ENCODE measurements at regions of chr15 and their contacts with region 1.

Region 1: GRCh38 chr15:30991255-30992072 is at the start of gene MTMR10:
- DNase-seq: peak; percentile 73
- ATAC-seq: peak; percentile 98
- H3K4me3 ChIP-seq: peak within 1 kb of the TSS; percentile 92
- H3K27ac ChIP-seq: peak within 1 kb of the TSS; percentile 79
- H3K4me1 ChIP-seq: peaks cover 2% of the 10 kb centered on the region; the same call in 1 of the 2 replicates
- H3K27me3 ChIP-seq: no peaks in the 10 kb centered on the region
- CTCF ChIP-seq: 0 out of 2 replicates have a peak, but pooled peaks have one; percentile 0
- POLR2A ChIP-seq: peak; percentile 87
- RAD21 ChIP-seq: no peak
- total RNA-seq, gene MTMR10: 13.8 and 22.5 TPM in 2 replicates

Region 2: GRCh38 chr15:30903497-30904201 is 87.8 kb before region 1 on chr15 and contains the start of gene FAN1:
- CTCF ChIA-PET with region 1: no interaction called
- POLR2A ChIA-PET with region 1: no interaction called
- dilution Hi-C with region 1: no loop called
- in situ Hi-C with region 1: no loop called
- intact Hi-C with region 1: no loop called
- DNase-seq: peak; percentile 84
- ATAC-seq: peak; percentile 99
- H3K4me3 ChIP-seq: peak within 1 kb of the TSS; percentile 69
- H3K27ac ChIP-seq: peak within 1 kb of the TSS; percentile 54
- H3K4me1 ChIP-seq: no peaks in the 10 kb centered on the region
- H3K27me3 ChIP-seq: no peaks in the 10 kb centered on the region
- CTCF ChIP-seq: no peak
- POLR2A ChIP-seq: no peak
- RAD21 ChIP-seq: no peak
- total RNA-seq, gene FAN1: 12.4 and 15.0 TPM in 2 replicates

Region 3: GRCh38 chr15:30929064-30929669 is 62.3 kb before region 1 on chr15:
- CTCF ChIA-PET with region 1: no interaction called
- POLR2A ChIA-PET with region 1: no interaction called
- dilution Hi-C with region 1: no loop called
- in situ Hi-C with region 1: no loop called
- intact Hi-C with region 1: loop called (anchors 2 kb)
- DNase-seq: no peak
- ATAC-seq: no peak
- H3K4me3 ChIP-seq: no peak overlapping the region
- H3K27ac ChIP-seq: no peak overlapping the region
- H3K4me1 ChIP-seq: peaks cover 16% of the 10 kb centered on the region
- H3K27me3 ChIP-seq: no peaks in the 10 kb centered on the region; the same call in 1 of the 2 replicates
- CTCF ChIP-seq: no peak
- POLR2A ChIP-seq: no peak
- RAD21 ChIP-seq: no peak

Region 4: DNA sequence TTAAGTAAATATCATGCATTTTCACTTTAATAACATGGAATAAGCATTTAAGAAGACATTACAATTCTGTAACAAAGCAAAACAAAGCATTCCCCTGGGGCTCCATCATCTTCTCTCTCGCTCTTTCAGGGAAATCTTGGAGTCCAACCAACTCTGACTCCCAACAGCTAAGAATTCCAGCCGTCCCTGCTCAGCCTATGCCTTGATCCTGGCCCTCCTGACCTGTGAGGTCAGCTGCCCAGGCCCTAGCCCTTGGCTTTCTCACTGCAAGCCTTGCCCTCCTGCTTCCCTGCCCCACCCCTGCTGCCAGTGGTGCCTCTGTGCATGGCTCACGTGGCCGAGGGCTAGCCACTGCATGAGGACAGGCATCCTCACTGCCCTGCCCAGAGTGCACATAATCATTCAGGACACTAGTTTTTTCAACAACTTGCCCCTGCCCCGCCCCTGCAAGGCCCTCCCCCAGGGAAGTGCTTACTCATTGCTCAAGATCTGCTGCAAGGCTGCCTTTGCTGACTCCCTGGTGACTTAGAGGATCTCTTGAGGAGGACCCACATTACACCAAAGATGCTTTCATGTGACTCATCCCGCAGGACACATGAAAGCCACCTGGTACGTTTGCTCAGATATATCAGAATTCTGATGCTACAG is 37.6 kb before region 1 on chr15:
- CTCF ChIA-PET with region 1: no interaction called
- POLR2A ChIA-PET with region 1: interaction called, 3 read pairs
- dilution Hi-C with region 1: no loop called
- in situ Hi-C with region 1: no loop called
- intact Hi-C with region 1: loop called (anchors 1 kb)
- DNase-seq: peak; percentile 96
- ATAC-seq: peak; percentile 95
- H3K4me3 ChIP-seq: no peak overlapping the region
- H3K27ac ChIP-seq: peak overlapping the region; percentile 86
- H3K4me1 ChIP-seq: peaks cover 9% of the 10 kb centered on the region
- H3K27me3 ChIP-seq: no peaks in the 10 kb centered on the region
- CTCF ChIP-seq: no peak
- POLR2A ChIP-seq: no peak
- RAD21 ChIP-seq: peak; percentile 27

Region 5: GRCh38 chr15:31032959-31033358 is 41.5 kb after region 1 on chr15:
- CTCF ChIA-PET with region 1: no interaction called
- POLR2A ChIA-PET with region 1: no interaction called
- dilution Hi-C with region 1: no loop called
- in situ Hi-C with region 1: no loop called
- intact Hi-C with region 1: loop called (anchors 5 kb)
- DNase-seq: peak; percentile 76
- ATAC-seq: peak; percentile 67
- H3K4me3 ChIP-seq: no peak overlapping the region
- H3K27ac ChIP-seq: peak overlapping the region; percentile 76
- H3K4me1 ChIP-seq: peaks cover 15% of the 10 kb centered on the region
- H3K27me3 ChIP-seq: no peaks in the 10 kb centered on the region
- CTCF ChIP-seq: no peak
- POLR2A ChIP-seq: no peak
- RAD21 ChIP-seq: no peak

Region 6: DNA sequence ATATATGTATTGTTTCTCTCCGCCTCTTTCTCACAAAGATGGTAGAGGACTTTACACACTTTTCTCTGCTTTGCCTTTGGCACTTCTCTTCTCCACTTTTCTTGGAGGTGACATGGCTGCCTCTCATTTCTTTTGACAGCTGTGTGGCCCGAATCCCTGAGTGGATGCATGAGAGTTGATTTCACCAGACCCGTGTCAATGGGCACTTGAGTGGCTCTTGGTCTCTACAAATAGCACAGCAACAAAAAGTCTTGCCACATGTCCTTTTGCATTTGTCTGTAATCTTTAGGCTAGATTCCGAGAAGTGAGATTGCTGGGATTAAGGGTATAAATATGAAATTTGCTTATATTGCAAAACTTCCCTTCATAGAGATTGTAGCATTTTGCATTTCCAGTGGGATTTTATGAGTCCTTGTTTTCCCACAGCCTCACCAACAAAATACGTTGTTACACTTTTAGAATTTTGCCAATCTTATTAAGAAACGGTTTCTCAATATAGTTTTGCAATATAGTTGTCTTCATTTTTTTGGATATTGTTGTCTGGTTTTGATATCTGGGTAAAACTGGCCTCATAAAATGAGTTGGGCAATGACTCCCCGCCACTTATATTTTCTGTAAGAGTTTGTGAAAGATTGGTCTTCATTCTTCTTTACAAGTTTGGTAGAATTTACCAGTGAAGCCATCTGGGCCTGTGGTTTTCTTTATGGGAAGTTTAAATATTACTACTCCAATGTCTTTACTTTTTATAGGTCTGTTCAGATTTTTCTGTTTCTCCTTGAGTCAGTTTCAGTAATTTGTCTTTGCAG is 115.2 kb after region 1 on chr15:
- CTCF ChIA-PET with region 1: no interaction called
- POLR2A ChIA-PET with region 1: no interaction called
- dilution Hi-C with region 1: no loop called
- in situ Hi-C with region 1: no loop called
- intact Hi-C with region 1: loop called (anchors 5 kb)
- DNase-seq: no peak
- ATAC-seq: no peak
- H3K4me3 ChIP-seq: no peak overlapping the region
- H3K27ac ChIP-seq: no peak overlapping the region
- H3K4me1 ChIP-seq: peaks cover 4% of the 10 kb centered on the region
- H3K27me3 ChIP-seq: peaks cover 5% of the 10 kb centered on the region
- CTCF ChIP-seq: no peak
- POLR2A ChIP-seq: no peak
- RAD21 ChIP-seq: no peak

Region 7: GRCh38 chr15:31128919-31129768 is 137.7 kb after region 1 on chr15:
- CTCF ChIA-PET with region 1: interaction called, 4 read pairs
- POLR2A ChIA-PET with region 1: no interaction called
- dilution Hi-C with region 1: no loop called
- in situ Hi-C with region 1: no loop called
- intact Hi-C with region 1: loop called (anchors 1 kb)
- DNase-seq: peak; percentile 57
- ATAC-seq: peak; percentile 96
- H3K4me3 ChIP-seq: no peak overlapping the region
- H3K27ac ChIP-seq: no peak overlapping the region
- H3K4me1 ChIP-seq: peaks cover 4% of the 10 kb centered on the region
- H3K27me3 ChIP-seq: peaks cover 16% of the 10 kb centered on the region
- CTCF ChIP-seq: peak; percentile 93
- POLR2A ChIP-seq: no peak
- RAD21 ChIP-seq: peak; percentile 92

Region 8: DNA sequence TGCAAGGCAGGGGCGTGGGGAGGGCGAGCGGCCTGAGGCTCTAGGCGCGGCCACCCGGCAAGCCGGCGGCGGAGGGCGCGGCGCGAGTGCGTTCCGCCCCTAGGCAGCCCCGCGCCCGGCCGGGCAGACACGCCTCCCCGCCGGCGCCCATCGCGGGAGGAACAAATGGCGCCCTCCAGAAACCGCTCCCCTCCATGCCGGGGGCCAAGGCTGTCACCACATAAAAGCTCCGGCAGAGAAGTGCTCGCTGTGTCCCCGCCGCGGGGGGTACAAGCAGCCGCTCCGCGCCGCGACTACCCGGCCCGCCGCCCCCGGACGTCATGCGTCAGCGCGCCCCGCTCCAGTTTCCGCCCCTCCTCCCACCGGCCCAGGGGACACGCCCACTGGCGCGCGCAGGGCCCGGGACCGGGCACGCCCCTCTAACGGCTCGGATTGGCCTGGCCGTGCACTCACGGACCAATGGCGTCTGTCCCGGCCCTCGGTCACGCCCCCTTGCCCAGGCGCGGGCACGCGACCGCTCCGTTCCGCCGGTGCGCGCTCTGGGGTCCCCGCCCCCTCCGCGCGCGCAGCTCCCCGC is 334.8 kb after region 1 on chr15:
- CTCF ChIA-PET with region 1: no interaction called
- POLR2A ChIA-PET with region 1: no interaction called
- dilution Hi-C with region 1: no loop called
- in situ Hi-C with region 1: no loop called
- intact Hi-C with region 1: loop called (anchors 10 kb)
- DNase-seq: peak; percentile 97
- ATAC-seq: peak; percentile 91
- H3K4me3 ChIP-seq: peak overlapping the region; percentile 86
- H3K27ac ChIP-seq: peak overlapping the region; percentile 92
- H3K4me1 ChIP-seq: peaks cover 7% of the 10 kb centered on the region
- H3K27me3 ChIP-seq: peaks cover under 1% of the 10 kb centered on the region; the same call in 1 of the 2 replicates
- CTCF ChIP-seq: no peak; the same call in 1 of the 2 replicates
- POLR2A ChIP-seq: peak; percentile 89; the same call in 1 of the 2 replicates
- RAD21 ChIP-seq: no peak